Activated CD4-positive, alpha-beta T cell treated with anti-CD3 and anti-CD28 coated beads for 36 hours (primary cell): ENCODE measurements at regions of chr1 and their contacts with region 1.

Region 1: GRCh38 chr1:234326497-234327366 is 46.5 kb upstream of the COA6 start:
- DNase-seq: peak; percentile 83
- ATAC-seq: peak; percentile 88
- H3K4me3 Mint-ChIP-seq: peak overlapping the region; percentile 69
- H3K27ac Mint-ChIP-seq: peak overlapping the region; percentile 61
- H3K4me1 Mint-ChIP-seq: peaks cover 22% of the 10 kb centered on the region
- H3K27me3 Mint-ChIP-seq: peaks cover 16% of the 10 kb centered on the region

Region 2: GRCh38 chr1:234114648-234115307 is 212.0 kb before region 1 on chr1:
- CTCF ChIA-PET with region 1: interaction called, 5 read pairs
- POLR2A ChIA-PET with region 1: no interaction called
- intact Hi-C with region 1: loop called in 1 of 2 experiments (anchors 1 kb)
- DNase-seq: peak; percentile 42
- ATAC-seq: peak; percentile 55
- H3K4me3 Mint-ChIP-seq: peak overlapping the region; percentile 30
- H3K27ac Mint-ChIP-seq: no peak overlapping the region
- H3K4me1 Mint-ChIP-seq: peaks cover 5% of the 10 kb centered on the region
- H3K27me3 Mint-ChIP-seq: peaks cover 12% of the 10 kb centered on the region

Region 3: DNA sequence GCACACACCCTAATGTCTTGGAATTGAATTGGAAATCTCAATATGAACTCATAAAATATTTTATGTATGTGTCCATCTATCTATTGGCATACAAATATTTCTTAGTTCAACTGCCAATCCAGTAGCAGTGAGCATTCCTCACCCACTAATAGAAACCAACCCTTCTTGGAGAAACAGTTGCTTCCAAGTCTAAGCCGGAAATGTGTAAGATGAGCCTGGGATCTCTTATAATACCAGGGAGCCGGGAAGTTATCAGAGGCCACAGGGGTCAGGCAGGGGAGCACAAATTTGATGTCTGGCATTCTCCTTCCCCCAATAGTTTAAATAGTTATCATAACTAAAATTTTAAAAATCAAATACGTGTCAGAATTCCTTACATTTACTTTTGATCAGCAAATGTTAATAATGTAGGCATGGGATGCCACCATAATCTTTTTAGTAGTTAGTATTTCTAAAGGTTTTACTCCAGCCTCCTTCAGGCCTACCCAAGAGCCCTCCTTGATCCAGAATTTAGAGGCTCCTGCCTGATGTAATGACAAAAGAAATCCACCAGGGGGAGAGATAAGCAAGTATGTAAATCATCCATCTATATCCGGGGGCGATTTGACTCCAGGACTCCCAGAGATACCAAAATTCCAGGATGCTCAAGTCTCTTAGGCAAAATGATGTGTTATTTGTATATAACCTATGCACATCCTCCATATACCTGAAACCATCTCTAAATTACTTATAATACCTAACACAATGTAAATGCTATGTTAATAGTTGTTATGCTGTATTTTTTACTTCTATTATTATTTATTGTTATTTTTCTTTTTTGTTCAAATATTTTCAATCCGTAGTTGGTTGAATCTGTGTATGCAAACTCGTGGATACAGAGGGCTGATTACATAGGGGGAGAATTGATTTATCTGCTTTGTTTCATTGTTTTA is 172.1 kb before region 1 on chr1:
- CTCF ChIA-PET with region 1: interaction called, 3 read pairs
- POLR2A ChIA-PET with region 1: no interaction called
- intact Hi-C with region 1: loop called (anchors 1 kb)
- DNase-seq: peak; percentile 20
- ATAC-seq: peak; percentile 61
- H3K4me3 Mint-ChIP-seq: no peak overlapping the region
- H3K27ac Mint-ChIP-seq: no peak overlapping the region
- H3K4me1 Mint-ChIP-seq: peaks cover 4% of the 10 kb centered on the region
- H3K27me3 Mint-ChIP-seq: peaks cover 4% of the 10 kb centered on the region

Region 4: GRCh38 chr1:234315091-234315541 is 11.6 kb before region 1 on chr1:
- CTCF ChIA-PET with region 1: interaction called, 69 read pairs
- POLR2A ChIA-PET with region 1: no interaction called
- intact Hi-C with region 1: loop called in 1 of 2 experiments (anchors 1 kb)
- DNase-seq: peak; percentile 56
- ATAC-seq: peak; percentile 84
- H3K4me3 Mint-ChIP-seq: peak overlapping the region; percentile 22
- H3K27ac Mint-ChIP-seq: peak overlapping the region; percentile 89
- H3K4me1 Mint-ChIP-seq: peaks cover 63% of the 10 kb centered on the region
- H3K27me3 Mint-ChIP-seq: peaks cover 1% of the 10 kb centered on the region

Region 5: DNA sequence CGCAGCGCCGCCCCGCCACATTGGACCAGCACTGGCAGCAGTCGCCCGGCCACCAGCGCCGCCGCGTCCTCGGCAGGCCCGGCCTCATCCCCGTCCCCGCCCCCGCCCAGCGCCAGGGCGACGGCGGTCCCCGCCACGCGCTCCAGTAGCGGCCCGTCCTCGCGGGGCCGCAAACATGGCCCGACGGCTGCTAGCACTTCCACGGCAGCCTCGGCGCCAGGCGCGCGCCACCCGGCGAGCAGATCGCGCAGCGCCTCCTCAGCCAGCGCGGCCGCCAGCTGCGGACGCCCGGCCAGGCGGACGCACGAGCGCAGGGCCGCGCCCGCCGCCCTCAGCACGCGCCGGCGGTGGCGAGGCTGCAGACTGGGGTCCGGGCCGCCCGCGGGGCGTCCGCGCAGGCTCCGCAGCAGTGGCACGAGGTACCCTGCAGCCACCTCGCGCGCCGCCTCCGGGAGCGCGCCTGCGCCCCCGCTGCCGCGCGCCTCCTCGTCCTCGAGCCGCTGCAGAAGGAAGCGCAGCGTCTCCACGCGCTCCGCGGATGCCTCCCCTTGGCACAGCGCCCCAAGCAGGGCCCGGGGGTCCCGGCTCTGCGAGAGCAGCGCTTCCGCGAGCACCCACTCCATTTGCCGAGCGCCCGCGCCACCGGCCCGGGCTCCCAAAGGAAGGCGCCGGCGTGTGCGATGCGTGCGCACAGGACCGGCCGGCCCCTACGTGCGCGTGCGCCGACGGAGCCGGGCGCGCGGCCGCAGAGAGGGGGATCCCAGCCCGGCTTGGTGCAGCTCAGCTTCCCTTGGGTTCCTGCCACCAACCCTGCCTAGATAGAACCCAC is 152.0 kb after region 1 on chr1 and contains the start of gene TARBP1:
- CTCF ChIA-PET with region 1: no interaction called
- POLR2A ChIA-PET with region 1: no interaction called
- intact Hi-C with region 1: loop called in 1 of 2 experiments (anchors 2 kb)
- DNase-seq: peak; percentile 86
- ATAC-seq: peak; percentile 81
- H3K4me3 Mint-ChIP-seq: peak within 1 kb of the TSS; percentile 82
- H3K27ac Mint-ChIP-seq: peak within 1 kb of the TSS; percentile 80
- H3K4me1 Mint-ChIP-seq: peaks cover 56% of the 10 kb centered on the region
- H3K27me3 Mint-ChIP-seq: peaks cover 16% of the 10 kb centered on the region
- total RNA-seq, gene TARBP1: 37.7 to 41.5 TPM